WTC11 (cell line): ENCODE measurements at regions of chr22 and their contacts with region 1.

Region 1: GRCh38 chr22:37303821-37304274 is 21.5 kb downstream of the CYTH4 start:
- DNase-seq: no peak
- ATAC-seq: no peak
- H3K4me3 Mint-ChIP-seq: no peak overlapping the region
- H3K27ac Mint-ChIP-seq: no peak overlapping the region
- H3K4me1 Mint-ChIP-seq: peaks cover 38% of the 10 kb centered on the region
- H3K27me3 Mint-ChIP-seq: peaks cover 10% of the 10 kb centered on the region
- CTCF ChIP-seq: no peak

Region 2: DNA sequence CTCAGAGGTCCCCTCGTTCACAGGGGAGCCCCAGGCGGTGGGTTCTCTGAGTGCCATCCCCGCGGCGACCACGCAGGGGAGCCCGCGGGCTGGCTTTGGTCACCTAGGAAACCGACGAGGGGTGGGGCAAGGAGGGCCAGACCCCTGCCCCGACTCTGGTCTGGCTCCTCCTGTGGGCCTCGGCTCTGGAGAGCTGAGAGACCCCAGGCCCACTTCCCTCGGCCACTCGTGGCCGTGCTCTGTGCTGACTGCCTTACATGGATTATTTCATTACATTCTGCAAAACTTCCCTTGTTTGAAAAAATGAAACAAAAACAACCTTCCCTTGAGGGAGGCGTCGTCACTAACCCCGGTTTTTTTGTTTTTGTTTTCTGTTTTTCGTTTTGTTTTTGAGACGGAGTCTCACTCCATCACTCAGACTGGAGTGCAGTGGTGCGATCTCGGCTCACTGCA is 36.7 kb before region 1 on chr22:
- CTCF ChIA-PET with region 1: interaction called, 10 read pairs
- POLR2A ChIA-PET with region 1: no interaction called
- DNase-seq: peak; percentile 86
- ATAC-seq: peak; percentile 99
- H3K4me3 Mint-ChIP-seq: peak overlapping the region; percentile 36
- H3K27ac Mint-ChIP-seq: peak overlapping the region; percentile 77; the same call in 1 of the 2 replicates
- H3K4me1 Mint-ChIP-seq: peaks cover 6% of the 10 kb centered on the region
- H3K27me3 Mint-ChIP-seq: peaks cover 14% of the 10 kb centered on the region
- CTCF ChIP-seq: peak; percentile 77

Region 3: DNA sequence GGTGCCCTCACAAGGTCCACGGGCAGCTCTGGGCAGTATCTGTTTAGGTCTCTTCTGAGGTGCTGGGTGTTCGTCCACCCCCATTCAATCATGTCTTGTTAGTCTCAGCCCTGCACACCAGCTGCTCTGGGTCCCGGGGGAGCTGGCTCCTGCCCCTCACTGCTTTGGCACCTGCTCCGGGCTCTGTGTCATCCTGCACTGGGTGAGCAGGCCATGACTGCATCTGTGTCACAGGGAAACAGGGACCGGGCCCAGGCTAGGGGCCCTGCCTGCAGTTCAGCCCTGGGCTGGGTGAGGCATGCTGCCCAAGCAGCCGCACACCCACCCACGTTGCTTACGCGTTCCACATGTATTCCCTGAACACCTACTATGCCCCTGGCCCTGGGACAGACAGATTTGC is 79.5 kb after region 1 on chr22:
- CTCF ChIA-PET with region 1: no interaction called
- POLR2A ChIA-PET with region 1: no interaction called
- DNase-seq: no peak
- ATAC-seq: no peak
- H3K4me3 Mint-ChIP-seq: no peak overlapping the region
- H3K27ac Mint-ChIP-seq: no peak overlapping the region
- H3K4me1 Mint-ChIP-seq: peaks cover 8% of the 10 kb centered on the region
- H3K27me3 Mint-ChIP-seq: no peaks in the 10 kb centered on the region
- CTCF ChIP-seq: no peak